SK-N-SH (cell line): ENCODE measurements at regions of chr1 and their contacts with region 1.

Region 1: DNA sequence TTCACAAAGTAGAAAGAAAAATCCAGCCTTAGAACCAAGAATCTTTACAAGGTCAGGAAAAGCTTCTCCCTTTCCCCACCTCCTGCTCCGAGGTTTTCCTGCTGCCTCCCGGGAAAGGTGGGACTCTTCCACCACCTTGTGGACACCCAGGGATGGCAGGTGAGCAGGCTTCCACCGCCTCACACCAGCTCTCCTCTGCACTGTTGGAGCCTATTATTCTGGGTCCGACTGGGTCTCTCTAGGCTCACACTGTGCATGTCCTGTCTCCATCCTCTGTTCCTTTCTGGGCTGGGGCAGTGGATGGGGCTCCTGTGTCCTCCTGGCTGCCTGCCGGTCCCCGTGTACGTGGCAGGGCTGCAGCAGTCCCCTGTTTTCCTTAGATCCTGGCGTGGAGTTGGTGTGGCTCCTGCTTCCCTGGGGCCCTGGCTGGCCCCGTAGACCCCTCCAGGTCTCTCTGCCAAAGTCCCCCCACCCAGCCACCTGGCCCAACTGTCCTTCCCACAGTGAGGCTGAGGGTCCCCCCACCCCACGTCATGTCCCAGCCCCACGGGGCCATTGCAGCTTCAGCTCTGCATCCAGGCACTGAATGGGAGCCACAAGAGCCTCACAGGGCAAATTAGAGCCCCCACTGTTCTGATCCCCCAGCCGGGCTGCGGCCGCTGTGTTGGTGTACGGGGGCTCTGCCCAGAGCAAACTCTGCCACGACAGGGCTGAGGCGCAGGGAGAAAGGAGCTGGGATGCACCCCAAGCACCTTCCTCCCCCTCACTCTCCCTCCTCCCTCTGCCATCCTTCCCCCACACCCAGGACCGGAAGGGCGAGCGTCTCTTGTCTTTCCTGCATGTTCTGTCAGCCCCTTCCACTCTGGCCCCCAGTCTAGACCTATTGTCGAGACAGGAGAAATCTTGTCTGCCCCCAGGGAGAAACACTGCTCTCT is 3.3 kb upstream of the SLC45A1 start:
- DNase-seq: peak; percentile 89
- H3K4me3 ChIP-seq: no peak overlapping the region; a peak in 1 of 4 replicates
- H3K27ac ChIP-seq: no peak overlapping the region
- H3K4me1 ChIP-seq: peaks cover 0 to 8% of the 10 kb centered on the region in 2 experiments; a peak in 1 of 4 replicates
- H3K27me3 ChIP-seq: no peaks in the 10 kb centered on the region
- CTCF ChIP-seq: peak; percentile 82
- EP300 ChIP-seq: no peak
- RAD21 ChIP-seq: peak; percentile 98

Region 2: DNA sequence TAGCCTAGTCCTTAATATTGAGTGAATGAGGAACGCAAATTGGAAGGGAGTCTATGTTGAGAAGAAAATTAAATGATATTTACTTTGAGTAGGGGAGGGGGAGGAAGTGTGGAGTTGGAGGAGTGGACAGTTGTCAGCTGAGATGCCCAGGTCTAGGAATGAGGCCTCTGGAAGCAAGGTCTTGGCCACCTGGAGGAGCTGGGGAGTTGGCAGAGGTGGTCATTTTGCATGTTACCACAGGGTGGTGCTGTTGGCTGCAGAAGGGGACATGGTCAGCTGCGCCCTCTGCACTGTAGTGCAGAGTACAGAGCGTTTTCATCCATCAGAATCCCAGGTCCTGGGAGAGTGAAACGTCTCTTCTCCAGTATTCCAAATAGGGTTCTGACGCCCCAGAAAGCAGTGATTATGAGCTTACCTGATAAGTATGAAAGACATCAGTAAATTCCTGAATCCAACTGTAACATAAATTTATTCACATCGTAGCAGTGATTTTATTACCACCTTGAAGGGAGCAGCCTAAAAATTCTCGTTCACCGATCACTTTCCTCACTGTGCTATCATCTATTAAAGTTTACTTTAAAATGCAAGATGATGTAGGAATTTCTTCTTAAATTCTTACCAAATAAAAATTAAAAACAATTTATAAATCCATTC is 339.3 kb before region 1 on chr1:
- CTCF ChIA-PET with region 1: interaction called, 90 read pairs
- POLR2A ChIA-PET with region 1: interaction called, 5 read pairs
- DNase-seq: peak; percentile 86
- H3K4me3 ChIP-seq: no peak overlapping the region
- H3K27ac ChIP-seq: no peak overlapping the region
- H3K4me1 ChIP-seq: no peaks in the 10 kb centered on the region
- H3K27me3 ChIP-seq: no peaks in the 10 kb centered on the region
- CTCF ChIP-seq: peak; percentile 79
- EP300 ChIP-seq: no peak
- RAD21 ChIP-seq: peak; percentile 81

Region 3: DNA sequence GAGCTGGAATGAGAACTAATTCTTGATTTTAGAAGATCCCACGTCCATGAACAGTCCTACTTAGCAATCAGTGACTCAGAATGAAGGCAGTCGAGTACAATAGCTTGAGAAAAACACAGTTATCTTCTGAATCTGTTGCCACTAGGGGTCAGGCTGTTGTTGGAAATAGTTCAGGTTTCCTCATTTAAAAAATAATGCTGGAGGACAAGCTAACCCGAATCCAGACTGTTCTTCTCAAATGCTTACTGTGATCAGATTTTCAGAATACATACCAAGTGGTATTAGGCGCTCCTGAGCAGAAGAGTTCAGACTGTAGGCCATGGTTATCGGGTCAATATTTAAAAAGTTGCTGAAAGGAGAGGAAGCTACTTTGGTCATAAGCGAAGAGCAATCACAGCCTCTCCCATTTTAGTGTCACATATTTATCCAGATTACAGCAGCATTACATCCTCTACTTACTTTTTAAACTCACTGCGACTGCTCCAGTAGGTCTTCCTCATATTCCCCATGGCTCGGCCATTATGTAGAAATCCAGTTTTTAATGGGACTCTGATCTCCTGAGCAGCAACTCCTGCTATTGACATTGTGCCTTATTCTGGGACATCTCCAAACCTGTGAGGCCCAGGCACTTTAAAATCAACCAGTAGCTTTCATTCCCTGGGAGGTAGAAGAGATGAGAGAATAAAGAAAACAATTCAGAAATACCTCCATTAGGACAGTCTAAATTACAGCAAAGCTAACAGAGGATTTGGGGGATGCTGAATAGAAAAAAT is 299.4 kb before region 1 on chr1:
- CTCF ChIA-PET with region 1: interaction called, 293 read pairs
- POLR2A ChIA-PET with region 1: interaction called, 4 read pairs
- DNase-seq: peak; percentile 62
- H3K4me3 ChIP-seq: no peak overlapping the region; a peak in 1 of 4 replicates
- H3K27ac ChIP-seq: peak overlapping the region; percentile 39 to 54
- H3K4me1 ChIP-seq: peaks cover 13 to 44% of the 10 kb centered on the region in 2 experiments
- H3K27me3 ChIP-seq: no peaks in the 10 kb centered on the region
- CTCF ChIP-seq: peak; percentile 75
- EP300 ChIP-seq: no peak
- RAD21 ChIP-seq: peak; percentile 80

Region 4: GRCh38 chr1:8035289-8035688 is 279.3 kb before region 1 on chr1:
- CTCF ChIA-PET with region 1: interaction called, 43 read pairs
- POLR2A ChIA-PET with region 1: no interaction called
- DNase-seq: no peak
- H3K4me3 ChIP-seq: no peak overlapping the region
- H3K27ac ChIP-seq: no peak overlapping the region
- H3K4me1 ChIP-seq: peaks cover 0 to 15% of the 10 kb centered on the region in 2 experiments; a peak in 2 of 4 replicates
- H3K27me3 ChIP-seq: no peaks in the 10 kb centered on the region
- CTCF ChIP-seq: no peak
- EP300 ChIP-seq: no peak
- RAD21 ChIP-seq: no peak

Region 5: GRCh38 chr1:8302081-8302956 is 12.3 kb before region 1 on chr1:
- CTCF ChIA-PET with region 1: interaction called, 28 read pairs
- POLR2A ChIA-PET with region 1: interaction called, 3 read pairs
- DNase-seq: no peak
- H3K4me3 ChIP-seq: no peak overlapping the region
- H3K27ac ChIP-seq: no peak overlapping the region
- H3K4me1 ChIP-seq: no peaks in the 10 kb centered on the region; a peak in 1 of 4 replicates
- H3K27me3 ChIP-seq: no peaks in the 10 kb centered on the region
- CTCF ChIP-seq: no peak
- EP300 ChIP-seq: no peak
- RAD21 ChIP-seq: no peak

Region 6: GRCh38 chr1:8348777-8349491 is 34.3 kb after region 1 on chr1:
- CTCF ChIA-PET with region 1: interaction called, 24 read pairs
- POLR2A ChIA-PET with region 1: no interaction called
- DNase-seq: peak; percentile 91
- H3K4me3 ChIP-seq: no peak overlapping the region; a peak in 1 of 4 replicates
- H3K27ac ChIP-seq: no peak overlapping the region
- H3K4me1 ChIP-seq: peaks cover under 1 to 13% of the 10 kb centered on the region in 2 experiments; a peak in 2 of 4 replicates
- H3K27me3 ChIP-seq: no peaks in the 10 kb centered on the region
- CTCF ChIP-seq: peak; percentile 72
- EP300 ChIP-seq: no peak
- RAD21 ChIP-seq: peak; percentile 78